PC-9 (cell line): ENCODE measurements at regions of chr17 and their contacts with region 1.

Region 1: GRCh38 chr17:2416010-2416734 is 15.3 kb upstream of the MNT start:
- DNase-seq: peak; percentile 69 to 91
- H3K4me3 ChIP-seq: no peak overlapping the region
- H3K27ac ChIP-seq: peak overlapping the region; percentile 20; the same call in 1 of the 2 replicates
- H3K4me1 ChIP-seq: peaks cover 4% of the 10 kb centered on the region; the same call in 1 of the 2 replicates
- H3K27me3 ChIP-seq: no peaks in the 10 kb centered on the region
- CTCF ChIP-seq: peak; percentile 98

Region 2: GRCh38 chr17:1882836-1883235 is 533.3 kb before region 1 on chr17:
- CTCF ChIA-PET with region 1: no interaction called
- POLR2A ChIA-PET with region 1: no interaction called
- intact Hi-C with region 1: loop called (anchors 2 kb)
- DNase-seq: peak in 1 of 2 experiments; percentile 25
- H3K4me3 ChIP-seq: no peak overlapping the region
- H3K27ac ChIP-seq: no peak overlapping the region
- H3K4me1 ChIP-seq: no peaks in the 10 kb centered on the region
- H3K27me3 ChIP-seq: no peaks in the 10 kb centered on the region
- CTCF ChIP-seq: peak; percentile 69

Region 3: DNA sequence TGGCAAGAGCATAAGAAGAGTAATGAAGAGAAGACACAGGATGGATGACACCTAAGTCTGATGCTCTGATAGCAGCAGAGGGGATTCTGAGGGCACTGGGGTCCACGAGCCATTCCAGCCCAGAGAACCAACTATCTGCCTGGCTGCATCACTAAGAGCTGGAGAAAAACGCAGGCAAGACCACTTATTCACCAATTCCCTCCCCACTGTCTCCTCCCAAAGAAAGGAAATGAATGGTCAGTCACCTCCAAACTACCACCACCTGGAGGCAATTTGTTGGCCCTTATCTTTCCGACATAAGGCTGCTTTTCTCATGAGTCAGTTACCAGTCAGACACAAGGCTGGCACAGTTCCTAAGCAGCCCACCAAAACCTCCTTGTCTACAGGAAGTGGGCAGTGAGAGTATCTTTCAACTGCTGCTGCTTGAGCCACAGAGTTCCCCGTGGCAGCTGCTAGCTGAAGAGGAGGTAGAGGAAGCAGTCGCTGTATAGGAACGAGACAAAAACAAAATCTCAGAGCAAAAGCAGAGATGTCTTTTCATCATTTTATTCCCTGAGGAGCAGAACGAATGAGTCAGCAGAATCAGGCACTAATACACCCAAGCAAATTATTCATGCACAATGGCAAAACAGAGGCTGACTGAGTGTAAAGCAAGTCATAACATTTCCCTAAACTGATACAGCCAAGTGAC is 223.7 kb before region 1 on chr17:
- CTCF ChIA-PET with region 1: no interaction called
- POLR2A ChIA-PET with region 1: no interaction called
- intact Hi-C with region 1: no loop called
- DNase-seq: peak; percentile 73 to 94
- H3K4me3 ChIP-seq: peak overlapping the region; percentile 18; the same call in 1 of the 2 replicates
- H3K27ac ChIP-seq: peak overlapping the region; percentile 80
- H3K4me1 ChIP-seq: peaks cover 56% of the 10 kb centered on the region
- H3K27me3 ChIP-seq: no peaks in the 10 kb centered on the region
- CTCF ChIP-seq: no peak

Region 4: DNA sequence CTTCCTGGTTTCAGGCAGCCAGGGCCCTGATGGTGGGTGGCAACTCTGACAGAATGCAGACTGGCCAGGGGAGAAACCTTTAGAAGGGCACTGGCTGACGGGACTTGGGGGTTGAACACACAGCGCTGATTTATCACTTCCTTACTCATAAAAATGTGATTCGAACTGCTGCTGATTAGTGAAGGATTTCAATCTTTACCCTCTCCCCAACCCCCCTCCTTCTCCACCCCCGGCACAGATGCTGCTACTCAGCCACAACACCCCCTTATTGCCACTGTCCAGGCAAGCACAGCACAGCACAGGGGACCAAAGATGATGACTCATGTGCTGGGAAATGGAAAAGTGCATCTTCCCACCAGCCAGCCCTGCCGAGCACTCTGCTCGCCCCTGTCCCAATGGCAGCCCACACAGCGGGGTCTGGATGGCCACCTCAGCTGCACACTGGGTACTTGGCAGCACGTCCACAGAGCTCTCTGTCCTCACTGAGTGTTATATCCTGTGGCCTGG is 182.7 kb before region 1 on chr17:
- CTCF ChIA-PET with region 1: no interaction called
- POLR2A ChIA-PET with region 1: no interaction called
- intact Hi-C with region 1: loop called (anchors 5 kb)
- DNase-seq: no peak
- H3K4me3 ChIP-seq: no peak overlapping the region
- H3K27ac ChIP-seq: no peak overlapping the region
- H3K4me1 ChIP-seq: no peaks in the 10 kb centered on the region
- H3K27me3 ChIP-seq: no peaks in the 10 kb centered on the region
- CTCF ChIP-seq: no peak

Region 5: GRCh38 chr17:2380226-2380922 is 35.8 kb before region 1 on chr17:
- CTCF ChIA-PET with region 1: interaction called, 102 read pairs
- POLR2A ChIA-PET with region 1: interaction called, 8 read pairs
- intact Hi-C with region 1: loop called (anchors 1 kb)
- DNase-seq: no peak
- H3K4me3 ChIP-seq: no peak overlapping the region
- H3K27ac ChIP-seq: no peak overlapping the region
- H3K4me1 ChIP-seq: no peaks in the 10 kb centered on the region
- H3K27me3 ChIP-seq: no peaks in the 10 kb centered on the region
- CTCF ChIP-seq: no peak

Region 6: DNA sequence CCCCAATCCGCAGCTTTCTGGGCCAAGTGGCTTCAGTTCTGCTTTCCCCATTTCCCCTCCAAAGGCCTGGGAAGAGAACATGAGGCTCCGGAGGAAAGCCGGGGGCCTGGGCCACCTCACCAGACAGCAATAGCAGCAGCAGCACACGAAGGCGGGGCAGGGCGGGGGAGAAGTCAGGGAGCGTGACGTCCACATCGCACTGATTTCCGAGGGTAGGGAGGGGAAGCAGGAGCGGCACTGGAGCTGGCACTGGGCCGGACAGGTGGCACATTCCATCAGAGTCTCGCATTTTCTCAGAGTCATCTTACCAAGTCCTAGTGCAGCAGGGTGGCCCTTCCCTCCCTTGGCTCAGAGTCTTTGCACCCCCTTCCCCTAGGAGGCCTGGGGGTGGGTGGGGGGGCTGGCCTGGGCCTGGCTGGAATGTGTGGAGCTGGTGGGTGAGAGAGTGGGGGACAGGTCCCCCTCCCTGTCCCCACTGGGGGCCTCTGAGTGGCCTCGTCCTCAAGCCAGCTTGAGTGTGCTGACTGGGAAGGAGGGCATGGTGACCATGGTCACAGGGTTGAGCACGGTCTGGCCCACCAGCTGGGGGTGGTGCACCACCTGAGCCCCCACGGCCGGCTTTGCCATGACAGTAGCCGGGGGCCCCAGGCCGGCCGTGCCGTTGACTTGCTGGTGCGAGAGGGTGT is 29.6 kb before region 1 on chr17:
- CTCF ChIA-PET with region 1: interaction called, 102 read pairs
- POLR2A ChIA-PET with region 1: interaction called, 8 read pairs
- intact Hi-C with region 1: loop called (anchors 1 kb)
- DNase-seq: peak in 1 of 2 experiments; percentile 89
- H3K4me3 ChIP-seq: no peak overlapping the region
- H3K27ac ChIP-seq: no peak overlapping the region
- H3K4me1 ChIP-seq: peaks cover 2% of the 10 kb centered on the region
- H3K27me3 ChIP-seq: no peaks in the 10 kb centered on the region
- CTCF ChIP-seq: no peak

Region 7: GRCh38 chr17:2521257-2521656 is 105.1 kb after region 1 on chr17:
- CTCF ChIA-PET with region 1: interaction called, 19 read pairs
- POLR2A ChIA-PET with region 1: no interaction called
- intact Hi-C with region 1: no loop called
- DNase-seq: no peak
- H3K4me3 ChIP-seq: no peak overlapping the region
- H3K27ac ChIP-seq: no peak overlapping the region
- H3K4me1 ChIP-seq: no peaks in the 10 kb centered on the region
- H3K27me3 ChIP-seq: no peaks in the 10 kb centered on the region
- CTCF ChIP-seq: no peak